Breast epithelium (tissue), 4 donors: ENCODE measurements at regions of chr5 and their contacts with region 1.

Region 1: GRCh38 chr5:153267506-153267905 is 223.0 kb upstream of the GRIA1 start:
- DNase-seq: no peak
- H3K4me3 ChIP-seq: no peak overlapping the region
- H3K27ac ChIP-seq: no peak overlapping the region
- H3K4me1 ChIP-seq: no peaks in the 10 kb centered on the region
- H3K27me3 ChIP-seq: no peaks in the 10 kb centered on the region
- CTCF ChIP-seq: no peak
- POLR2A ChIP-seq: no peak

Region 2: DNA sequence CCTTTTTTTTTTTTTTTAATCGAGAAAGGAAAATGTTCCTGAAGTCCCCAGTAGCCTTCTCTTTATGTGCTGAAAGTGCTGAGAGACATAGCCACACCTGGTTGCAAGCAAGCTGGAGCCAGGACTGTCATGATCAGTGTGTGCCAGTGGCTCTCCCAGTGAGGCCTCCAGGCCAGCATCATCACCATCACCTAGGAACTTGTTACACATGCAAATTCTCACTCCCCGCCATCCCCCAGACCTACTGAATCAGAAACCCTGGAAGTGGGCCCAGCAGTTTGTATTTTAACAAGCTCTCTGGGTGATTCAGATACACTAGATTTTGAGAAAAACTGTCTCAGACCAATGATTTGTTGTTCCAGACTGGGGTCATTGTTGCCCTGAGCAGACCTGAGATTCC is 1160.9 kb before region 1 on chr5:
- intact Hi-C with region 1: loop called (anchors 5 kb)
- DNase-seq: no peak
- H3K4me3 ChIP-seq: no peak overlapping the region
- H3K27ac ChIP-seq: no peak overlapping the region
- H3K4me1 ChIP-seq: no peaks in the 10 kb centered on the region
- H3K27me3 ChIP-seq: no peaks in the 10 kb centered on the region
- CTCF ChIP-seq: no peak
- POLR2A ChIP-seq: no peak